ENCODE measurements at regions of chr2 and their contacts with region 1.

Region 1: GRCh38 chr2:169221745-169222369 is 140.5 kb downstream of the LRP2 start:
- DNase-seq: no peak
- H3K4me3 ChIP-seq: no peak overlapping the region
- H3K27ac ChIP-seq: no peak overlapping the region
- H3K4me1 ChIP-seq: no peaks in the 10 kb centered on the region
- H3K27me3 ChIP-seq: no peaks in the 10 kb centered on the region
- CTCF ChIP-seq: peak in 2 of 3 experiments; percentile 16 to 46; a peak in 2 of 4 replicates
- EP300 ChIP-seq: no peak
- POLR2A ChIP-seq: no peak
- RAD21 ChIP-seq: peak; percentile 57 to 65

Region 2: GRCh38 chr2:169131587-169132512 is 90.0 kb before region 1 on chr2:
- CTCF ChIA-PET with region 1: interaction called, 12 read pairs
- POLR2A ChIA-PET with region 1: no interaction called
- DNase-seq: no peak
- H3K4me3 ChIP-seq: no peak overlapping the region
- H3K27ac ChIP-seq: no peak overlapping the region
- H3K4me1 ChIP-seq: no peaks in the 10 kb centered on the region
- H3K27me3 ChIP-seq: no peaks in the 10 kb centered on the region
- CTCF ChIP-seq: peak in 2 of 3 experiments; percentile 39 to 71; a peak in 2 of 4 replicates
- EP300 ChIP-seq: no peak
- POLR2A ChIP-seq: no peak
- RAD21 ChIP-seq: peak; percentile 34 to 44

Region 3: GRCh38 chr2:169184074-169184473 is 37.8 kb before region 1 on chr2:
- CTCF ChIA-PET with region 1: no interaction called
- POLR2A ChIA-PET with region 1: no interaction called
- DNase-seq: no peak
- H3K4me3 ChIP-seq: no peak overlapping the region
- H3K27ac ChIP-seq: no peak overlapping the region
- H3K4me1 ChIP-seq: no peaks in the 10 kb centered on the region
- H3K27me3 ChIP-seq: no peaks in the 10 kb centered on the region
- CTCF ChIP-seq: no peak
- EP300 ChIP-seq: no peak
- POLR2A ChIP-seq: no peak
- RAD21 ChIP-seq: no peak

Region 4: DNA sequence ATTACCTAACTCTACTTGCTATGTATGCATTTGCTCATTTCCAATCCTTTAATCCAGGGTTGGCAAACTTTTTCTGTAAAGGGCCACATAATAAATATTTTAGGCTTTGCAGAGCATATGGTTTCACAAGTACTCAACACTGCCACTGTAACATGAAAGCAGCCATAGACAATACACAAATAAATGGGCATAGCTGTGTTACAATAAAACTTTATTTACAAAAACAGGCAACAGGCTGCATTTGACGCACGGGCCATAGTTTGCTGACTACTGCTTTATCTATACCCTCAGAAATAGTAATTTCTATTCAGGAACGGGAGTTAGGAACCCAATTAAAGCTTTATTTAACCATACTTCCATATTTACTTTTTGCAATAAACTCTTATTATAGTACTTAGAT is 13.8 kb before region 1 on chr2:
- CTCF ChIA-PET with region 1: interaction called, 27 read pairs
- POLR2A ChIA-PET with region 1: no interaction called
- DNase-seq: no peak
- H3K4me3 ChIP-seq: no peak overlapping the region
- H3K27ac ChIP-seq: no peak overlapping the region
- H3K4me1 ChIP-seq: no peaks in the 10 kb centered on the region
- H3K27me3 ChIP-seq: no peaks in the 10 kb centered on the region
- CTCF ChIP-seq: no peak
- EP300 ChIP-seq: no peak
- POLR2A ChIP-seq: no peak
- RAD21 ChIP-seq: no peak

Region 5: DNA sequence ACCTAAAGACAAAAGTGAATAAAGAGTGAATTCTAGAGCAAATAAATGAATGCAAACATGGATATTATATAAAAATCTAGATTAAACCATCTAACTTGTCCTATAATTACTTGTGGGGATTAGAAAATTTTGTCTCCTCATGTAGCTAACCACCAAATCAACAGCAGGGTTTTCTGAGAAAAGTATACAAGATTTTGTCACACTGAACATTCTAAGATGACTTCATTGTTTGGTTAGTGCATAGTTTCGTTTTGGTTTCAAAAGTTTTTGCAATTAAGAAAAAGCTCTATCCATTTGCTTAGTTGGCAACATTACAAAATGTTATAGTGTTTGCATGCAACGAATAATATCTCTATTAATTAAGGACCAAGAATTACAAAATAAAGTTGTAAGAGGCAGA is 15.4 kb after region 1 on chr2:
- CTCF ChIA-PET with region 1: interaction called, 20 read pairs
- POLR2A ChIA-PET with region 1: no interaction called
- DNase-seq: no peak
- H3K4me3 ChIP-seq: no peak overlapping the region
- H3K27ac ChIP-seq: no peak overlapping the region
- H3K4me1 ChIP-seq: no peaks in the 10 kb centered on the region
- H3K27me3 ChIP-seq: no peaks in the 10 kb centered on the region
- CTCF ChIP-seq: no peak
- EP300 ChIP-seq: no peak
- POLR2A ChIP-seq: no peak
- RAD21 ChIP-seq: no peak

Region 6: DNA sequence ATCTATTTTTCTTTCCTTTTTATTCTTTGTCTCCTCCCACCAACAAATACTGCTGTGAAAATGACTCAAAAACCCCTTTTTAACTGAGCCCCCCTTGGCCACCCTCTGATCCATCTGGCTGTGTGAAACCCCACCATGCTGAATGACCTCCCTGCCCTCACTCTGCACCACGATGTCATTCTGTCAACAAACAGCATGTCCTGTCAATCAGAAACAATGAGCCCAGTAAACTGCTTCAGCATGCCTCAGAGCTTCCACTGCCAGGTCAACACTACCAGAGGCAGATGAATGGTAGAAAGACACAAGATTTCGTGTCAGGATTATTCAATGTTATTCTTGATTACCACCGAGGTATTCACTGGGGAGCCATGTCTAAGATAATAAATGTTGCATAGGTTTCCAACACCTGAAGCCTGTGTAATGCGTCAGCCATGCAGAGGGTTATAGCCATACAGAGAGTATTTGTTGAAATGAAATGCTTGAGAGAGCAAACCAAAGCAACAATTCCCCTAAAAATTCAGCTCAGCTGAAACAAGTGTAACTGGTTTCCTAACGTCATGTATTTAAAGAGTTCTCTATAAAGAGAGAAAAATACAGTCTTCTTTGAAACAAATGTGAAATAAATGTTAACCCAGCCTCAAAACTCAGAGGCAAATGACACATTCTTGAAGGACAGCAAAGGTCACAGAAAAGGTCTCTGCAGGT is 63.8 kb after region 1 on chr2:
- CTCF ChIA-PET with region 1: no interaction called
- POLR2A ChIA-PET with region 1: no interaction called
- DNase-seq: no peak
- H3K4me3 ChIP-seq: no peak overlapping the region
- H3K27ac ChIP-seq: no peak overlapping the region
- H3K4me1 ChIP-seq: peaks cover 0 to 9% (median under 1%) of the 10 kb centered on the region in 4 experiments; a peak in 4 of 7 replicates
- H3K27me3 ChIP-seq: no peaks in the 10 kb centered on the region
- CTCF ChIP-seq: no peak
- EP300 ChIP-seq: no peak
- POLR2A ChIP-seq: no peak
- RAD21 ChIP-seq: no peak

Measured in H1 (cell line).